ENCODE measurements at regions of chr1 and their contacts with region 1.

Region 1: DNA sequence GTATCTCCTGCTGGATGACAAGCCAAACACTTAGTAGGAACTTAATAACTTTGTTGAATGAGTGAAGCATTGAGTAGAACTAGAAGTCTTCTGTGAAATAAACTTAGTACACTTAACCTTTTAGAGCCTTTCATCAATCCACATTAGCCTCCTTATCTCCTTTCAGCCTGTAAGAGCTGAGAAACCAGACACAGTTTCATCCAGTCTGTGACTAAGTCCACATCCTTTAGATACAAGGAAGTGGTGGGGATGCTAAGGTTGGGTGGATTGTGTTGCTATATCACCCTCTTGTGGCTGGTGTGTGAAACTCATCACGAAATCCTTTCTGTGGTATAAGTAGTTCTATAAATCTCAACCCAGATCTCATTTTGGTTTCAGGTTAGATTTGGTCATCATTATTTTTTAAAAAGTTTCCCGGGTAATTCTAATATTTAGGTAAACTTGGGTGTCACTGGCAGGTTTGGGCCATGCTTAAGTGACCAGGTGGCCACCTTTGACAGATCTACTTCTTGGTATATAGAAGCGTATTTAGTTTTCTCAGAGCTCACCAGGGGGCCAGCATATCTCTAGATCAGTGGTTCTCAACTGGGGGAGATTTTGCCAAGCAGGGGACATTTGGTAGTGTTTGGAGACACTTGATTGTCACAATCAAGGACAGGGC is 27.8 kb upstream of the CD84 start:
- DNase-seq: peak; percentile 86 to 93 (median 92)
- H3K4me3 ChIP-seq: no peak overlapping the region
- H3K27ac ChIP-seq: no peak overlapping the region
- H3K4me1 ChIP-seq: peaks cover 0 to 18% (median 4%) of the 10 kb centered on the region in 4 experiments
- H3K27me3 ChIP-seq: no peaks in the 10 kb centered on the region

Region 2: GRCh38 chr1:160428655-160429054 is 178.5 kb before region 1 on chr1:
- CTCF ChIA-PET with region 1: interaction called, 120 read pairs
- POLR2A ChIA-PET with region 1: no interaction called
- DNase-seq: peak in 2 of 3 donors; percentile 33 to 34
- H3K4me3 ChIP-seq: no peak overlapping the region
- H3K27ac ChIP-seq: no peak overlapping the region
- H3K4me1 ChIP-seq: peaks cover 0 to 32% (median 18%) of the 10 kb centered on the region in 4 experiments
- H3K27me3 ChIP-seq: no peaks in the 10 kb centered on the region

Region 3: GRCh38 chr1:160550572-160551034 is 56.5 kb before region 1 on chr1:
- CTCF ChIA-PET with region 1: interaction called, 101 read pairs
- POLR2A ChIA-PET with region 1: interaction called, 3 read pairs
- DNase-seq: peak; percentile 26 to 45 (median 42)
- H3K4me3 ChIP-seq: no peak overlapping the region
- H3K27ac ChIP-seq: no peak overlapping the region
- H3K4me1 ChIP-seq: peaks cover 0 to 14% (median 3%) of the 10 kb centered on the region in 4 experiments
- H3K27me3 ChIP-seq: no peaks in the 10 kb centered on the region

Region 4: DNA sequence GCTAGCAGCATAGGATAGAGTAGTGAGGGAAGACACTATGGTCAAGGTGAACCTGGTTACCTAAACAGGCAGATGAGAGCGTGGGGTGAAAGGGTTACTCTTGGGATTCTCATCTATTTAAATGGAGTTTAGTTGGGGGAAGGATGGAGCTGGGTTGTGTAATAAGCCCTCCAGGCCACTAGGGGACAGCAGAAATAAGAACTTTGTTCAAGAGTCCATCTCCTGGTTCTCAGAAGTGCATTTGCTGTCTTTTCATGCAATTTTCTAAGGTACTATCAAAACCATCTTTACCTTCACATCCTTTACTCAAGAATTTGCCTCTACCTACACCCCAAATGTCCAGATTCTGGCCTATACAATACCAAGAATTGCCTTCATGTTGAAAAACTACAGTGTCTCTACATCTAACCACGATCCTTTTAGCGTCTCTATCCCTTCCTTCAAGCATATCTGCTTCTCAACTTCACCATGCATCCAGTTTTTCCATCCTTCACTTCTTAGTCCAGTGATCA is 11.7 kb after region 1 on chr1:
- CTCF ChIA-PET with region 1: interaction called, 12 read pairs
- POLR2A ChIA-PET with region 1: interaction called, 3 read pairs
- DNase-seq: peak in 2 of 3 donors; percentile 40 to 46
- H3K4me3 ChIP-seq: no peak overlapping the region
- H3K27ac ChIP-seq: no peak overlapping the region
- H3K4me1 ChIP-seq: peaks cover 0 to 12% (median 4%) of the 10 kb centered on the region in 4 experiments
- H3K27me3 ChIP-seq: no peaks in the 10 kb centered on the region

Measured in common myeloid progenitor, CD34-positive (primary cell).